CD4-positive, alpha-beta T cell (primary cell): ENCODE measurements at regions of chr2 and their contacts with region 1.

Region 1: GRCh38 chr2:53786705-53787612 is at the starts of genes ASB3 and ERLEC1:
- DNase-seq: peak; percentile 73 to 93 (median 84)
- ATAC-seq: peak; percentile 87
- H3K4me3 ChIP-seq: peak within 1 kb of the TSS; percentile 83
- H3K4me3 Mint-ChIP-seq: peak within 1 kb of the TSS; percentile 97
- H3K27ac ChIP-seq: peak within 1 kb of the TSS; percentile 79 to 87
- H3K27ac Mint-ChIP-seq: peak within 1 kb of the TSS; percentile 86
- H3K4me1 ChIP-seq: peaks cover 32% of the 10 kb centered on the region
- H3K4me1 Mint-ChIP-seq: peaks cover 59% of the 10 kb centered on the region
- H3K27me3 ChIP-seq: no peaks in the 10 kb centered on the region
- H3K27me3 Mint-ChIP-seq: no peaks in the 10 kb centered on the region
- CTCF ChIP-seq: no peak
- total RNA-seq, gene ASB3: 31.0 to 34.3 TPM
- total RNA-seq, gene ERLEC1: 14.5 to 14.7 TPM

Region 2: DNA sequence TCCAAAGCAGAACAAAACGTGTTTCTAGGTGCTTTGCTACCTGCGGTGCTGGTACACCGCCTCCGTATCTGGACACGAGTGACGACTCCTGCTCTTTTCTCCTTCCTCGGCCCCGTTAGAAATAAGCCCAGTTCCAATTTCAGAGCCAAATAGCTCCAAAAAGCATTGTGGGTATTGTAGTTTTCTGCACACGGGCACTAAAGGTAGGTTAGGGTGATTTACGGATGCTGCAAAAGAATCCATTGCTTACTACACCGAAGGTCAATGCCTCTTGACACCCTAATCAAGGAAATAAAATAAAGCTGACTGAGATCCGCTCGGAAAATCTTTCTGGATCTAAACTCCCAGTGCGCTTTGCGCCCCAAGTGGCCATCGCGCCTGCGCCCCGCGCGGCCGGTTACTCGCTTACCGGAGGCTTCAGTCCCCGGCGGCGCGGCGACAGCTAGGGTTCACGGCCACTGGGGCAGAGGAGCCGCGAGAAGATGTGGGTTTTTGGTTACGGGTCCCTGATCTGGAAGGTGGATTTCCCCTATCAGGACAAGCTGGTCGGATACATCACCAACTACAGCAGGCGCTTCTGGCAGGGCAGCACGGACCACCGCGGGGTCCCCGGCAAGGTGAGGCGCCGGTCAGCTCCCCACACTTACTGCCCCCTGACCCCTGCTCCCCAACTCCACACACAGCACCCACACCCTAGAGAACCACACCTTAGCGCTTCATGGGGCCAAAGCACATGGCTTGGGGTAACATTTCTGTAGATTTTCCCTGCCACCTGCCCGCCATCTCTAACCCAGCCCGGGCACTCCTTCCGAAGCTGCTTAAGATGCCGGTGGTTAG is 19.3 kb before region 1 on chr2 and contains the start of gene CHAC2:
- CTCF ChIA-PET with region 1: interaction called, 18 read pairs
- POLR2A ChIA-PET with region 1: interaction called, 82 read pairs
- intact Hi-C with region 1: loop called (anchors 1 to 2 kb)
- DNase-seq: peak; percentile 68 to 93 (median 78)
- ATAC-seq: peak; percentile 88
- H3K4me3 ChIP-seq: peak within 1 kb of the TSS; percentile 77
- H3K4me3 Mint-ChIP-seq: peak within 1 kb of the TSS; percentile 95
- H3K27ac ChIP-seq: peak within 1 kb of the TSS; percentile 75 to 83
- H3K27ac Mint-ChIP-seq: peak within 1 kb of the TSS; percentile 91
- H3K4me1 ChIP-seq: peaks cover 13% of the 10 kb centered on the region
- H3K4me1 Mint-ChIP-seq: peaks cover 41% of the 10 kb centered on the region
- H3K27me3 ChIP-seq: no peaks in the 10 kb centered on the region
- H3K27me3 Mint-ChIP-seq: no peaks in the 10 kb centered on the region
- CTCF ChIP-seq: peak; percentile 59
- total RNA-seq, gene CHAC2: 0.47 to 0.85 TPM

Region 3: GRCh38 chr2:55232084-55232862 is 1445.3 kb after region 1 on chr2 and contains the starts of genes CLHC1 and RPS27A:
- CTCF ChIA-PET with region 1: no interaction called
- POLR2A ChIA-PET with region 1: interaction called, 3 read pairs
- intact Hi-C with region 1: loop called in 1 of 2 experiments (anchors 10 kb)
- DNase-seq: peak; percentile 90 to 96 (median 94)
- ATAC-seq: peak; percentile 87
- H3K4me3 ChIP-seq: peak within 1 kb of the TSS; percentile 77
- H3K4me3 Mint-ChIP-seq: peak within 1 kb of the TSS; percentile 95
- H3K27ac ChIP-seq: peak within 1 kb of the TSS; percentile 97 to 100
- H3K27ac Mint-ChIP-seq: peak within 1 kb of the TSS; percentile 92
- H3K4me1 ChIP-seq: peaks cover 31% of the 10 kb centered on the region
- H3K4me1 Mint-ChIP-seq: peaks cover 81% of the 10 kb centered on the region
- H3K27me3 ChIP-seq: no peaks in the 10 kb centered on the region
- H3K27me3 Mint-ChIP-seq: no peaks in the 10 kb centered on the region
- CTCF ChIP-seq: no peak
- total RNA-seq, gene CLHC1: 4.4 TPM
- total RNA-seq, gene RPS27A: 2,201 to 2,315 TPM

Region 4: GRCh38 chr2:55693181-55694134 is 1906.5 kb after region 1 on chr2 and contains the start of gene PNPT1:
- CTCF ChIA-PET with region 1: no interaction called
- POLR2A ChIA-PET with region 1: no interaction called
- intact Hi-C with region 1: loop called in 1 of 2 experiments (anchors 10 kb)
- DNase-seq: peak; percentile 85 to 96 (median 90)
- ATAC-seq: peak; percentile 100
- H3K4me3 ChIP-seq: peak within 1 kb of the TSS; percentile 94
- H3K4me3 Mint-ChIP-seq: peak within 1 kb of the TSS; percentile 94
- H3K27ac ChIP-seq: peak within 1 kb of the TSS; percentile 31 to 37
- H3K27ac Mint-ChIP-seq: peak within 1 kb of the TSS; percentile 92
- H3K4me1 ChIP-seq: peaks cover 10% of the 10 kb centered on the region
- H3K4me1 Mint-ChIP-seq: peaks cover 44% of the 10 kb centered on the region
- H3K27me3 ChIP-seq: no peaks in the 10 kb centered on the region
- H3K27me3 Mint-ChIP-seq: no peaks in the 10 kb centered on the region
- CTCF ChIP-seq: no peak
- total RNA-seq, gene PNPT1: 10.2 to 10.3 TPM